ENCODE measurements at regions of chr2 and their contacts with region 1.

Region 1: GRCh38 chr2:149167411-149167810 is 128.9 kb downstream of the LYPD6B start:
- DNase-seq: no peak
- H3K4me3 Mint-ChIP-seq: no peak overlapping the region
- H3K27ac Mint-ChIP-seq: no peak overlapping the region
- H3K4me1 Mint-ChIP-seq: peaks cover 40% of the 10 kb centered on the region
- H3K27me3 Mint-ChIP-seq: no peaks in the 10 kb centered on the region
- CTCF ChIP-seq: no peak

Region 2: DNA sequence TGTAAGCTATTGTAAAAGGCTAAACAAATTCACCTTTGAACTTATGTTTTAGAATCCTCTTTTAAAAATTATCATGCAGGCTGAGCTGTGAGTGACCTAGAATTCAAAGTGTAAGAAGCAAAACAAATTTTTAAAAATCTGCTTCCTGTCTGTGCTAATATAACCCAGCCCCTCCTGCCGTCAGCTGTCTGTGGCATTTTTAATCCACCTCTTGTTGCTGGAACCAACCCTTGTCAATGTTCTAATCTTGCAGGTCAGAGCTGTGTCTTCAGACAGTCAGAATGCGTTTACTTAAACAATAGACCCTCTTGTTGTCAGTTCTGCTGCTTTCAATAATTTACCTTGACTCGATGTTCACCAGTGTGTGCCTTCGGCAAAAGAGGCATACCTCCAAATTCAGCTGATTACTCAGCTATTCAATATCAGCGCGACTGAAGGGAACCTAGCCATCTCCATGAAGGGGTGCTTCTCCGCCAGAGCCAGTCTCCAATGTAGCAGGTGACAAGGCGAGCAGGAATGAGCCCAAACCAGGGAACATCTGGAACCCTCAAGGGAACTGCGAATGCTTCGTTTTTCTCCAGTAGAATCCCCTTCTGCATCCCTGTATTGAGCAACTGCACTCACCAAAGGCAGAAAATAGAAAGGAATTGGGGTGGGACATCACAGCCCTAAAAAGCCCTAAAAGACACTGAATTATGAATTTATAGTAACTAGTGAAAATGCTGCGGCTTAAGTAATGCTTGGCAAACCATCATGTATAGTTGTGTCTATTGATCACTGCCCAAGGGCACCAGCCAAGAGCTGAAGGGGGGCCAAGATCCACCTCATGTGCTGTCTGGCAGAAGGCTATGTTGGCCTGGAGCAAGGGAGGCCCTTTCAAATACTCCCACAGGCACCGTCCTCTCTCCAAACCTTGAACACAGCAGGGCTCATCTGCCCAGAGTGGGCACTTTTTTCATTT is 66.4 kb before region 1 on chr2:
- CTCF ChIA-PET with region 1: no interaction called
- intact Hi-C with region 1: loop called (anchors 5 kb)
- DNase-seq: peak; percentile 13
- H3K4me3 Mint-ChIP-seq: peak overlapping the region; percentile 41
- H3K27ac Mint-ChIP-seq: no peak overlapping the region
- H3K4me1 Mint-ChIP-seq: peaks cover 20% of the 10 kb centered on the region
- H3K27me3 Mint-ChIP-seq: peaks cover 6% of the 10 kb centered on the region
- CTCF ChIP-seq: no peak

Region 3: DNA sequence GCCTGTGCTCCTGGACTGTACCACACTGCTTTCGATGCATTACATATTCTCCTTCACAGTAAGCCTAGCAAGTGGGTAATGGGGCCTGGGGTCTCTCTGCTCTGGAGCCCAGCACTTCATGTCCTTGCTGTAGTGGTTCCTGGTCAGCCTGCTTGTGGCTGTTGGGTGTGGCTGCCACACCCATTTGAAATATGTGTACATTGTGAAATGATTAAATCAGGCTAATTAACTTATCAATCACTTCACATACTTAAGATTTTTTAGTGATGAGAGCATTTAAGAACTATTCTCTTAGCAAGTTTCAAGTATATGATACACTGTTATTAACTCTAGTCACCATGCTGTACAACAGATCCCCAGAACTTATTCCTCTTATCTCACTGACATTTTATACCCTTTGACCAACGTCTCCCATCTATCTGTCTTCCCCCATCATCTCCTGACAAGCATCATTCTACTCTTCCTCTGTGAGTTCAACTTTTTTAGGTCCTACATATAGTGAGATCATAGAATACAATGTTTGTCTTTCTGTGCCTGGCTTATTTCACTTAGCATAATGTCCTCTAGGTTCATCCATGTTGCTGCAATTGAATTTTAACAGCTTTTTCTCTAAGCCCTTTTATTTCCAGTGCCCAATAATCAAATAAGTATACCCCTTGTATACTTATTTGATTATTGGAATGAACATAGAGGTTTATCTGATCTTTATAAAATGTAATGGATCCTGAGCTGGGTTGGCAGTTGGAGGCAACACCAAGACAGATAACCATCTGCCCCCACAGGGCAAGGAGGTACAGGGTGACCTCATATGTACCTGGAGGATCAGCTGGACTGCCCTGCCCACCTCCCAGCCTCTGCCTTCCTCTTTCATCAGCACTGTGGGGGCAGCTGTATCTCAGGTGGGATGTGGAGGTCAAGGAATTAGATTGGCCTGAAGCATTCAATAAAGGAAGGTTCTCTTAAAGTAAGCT is 255.2 kb after region 1 on chr2:
- CTCF ChIA-PET with region 1: no interaction called
- intact Hi-C with region 1: no loop called
- DNase-seq: peak; percentile 49
- H3K4me3 Mint-ChIP-seq: no peak overlapping the region
- H3K27ac Mint-ChIP-seq: peak overlapping the region; percentile 21
- H3K4me1 Mint-ChIP-seq: peaks cover 27% of the 10 kb centered on the region
- H3K27me3 Mint-ChIP-seq: no peaks in the 10 kb centered on the region
- CTCF ChIP-seq: no peak